Panc1 (cell line): ENCODE measurements at regions of chr17 and their contacts with region 1.

Region 1: DNA sequence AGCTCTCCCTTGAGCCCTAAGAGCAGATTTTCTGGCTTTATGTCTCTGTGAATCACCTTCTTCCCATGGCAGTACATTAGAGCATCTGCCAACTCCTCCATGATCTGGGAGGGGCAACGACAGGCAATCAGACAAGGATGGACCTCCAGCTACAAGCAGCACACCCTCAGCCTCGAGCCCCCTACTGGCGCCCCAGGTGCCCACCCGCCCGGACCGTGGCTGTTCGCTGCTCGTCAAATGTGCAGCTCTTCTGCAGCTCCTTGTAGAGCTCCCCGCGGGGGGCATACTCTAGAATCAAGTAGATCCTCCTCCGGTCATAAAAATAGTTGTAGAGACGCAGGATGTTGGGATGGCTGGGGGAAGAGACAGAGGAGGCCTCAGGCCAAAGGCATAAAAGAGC is 3.8 kb downstream of the AURKB start:
- DNase-seq: no peak
- ATAC-seq: no peak
- H3K4me3 ChIP-seq: no peak overlapping the region
- H3K27ac ChIP-seq: no peak overlapping the region
- H3K4me1 ChIP-seq: peaks cover 17% of the 10 kb centered on the region
- H3K27me3 ChIP-seq: no peaks in the 10 kb centered on the region
- CTCF ChIP-seq: no peak

Region 2: GRCh38 chr17:7803981-7804380 is 402.6 kb before region 1 on chr17:
- CTCF ChIA-PET with region 1: no interaction called
- POLR2A ChIA-PET with region 1: no interaction called
- in situ Hi-C with region 1: no loop called
- intact Hi-C with region 1: no loop called
- DNase-seq: no peak
- ATAC-seq: peak; percentile 60; the same call in 1 of the 2 replicates
- H3K4me3 ChIP-seq: no peak overlapping the region
- H3K27ac ChIP-seq: no peak overlapping the region
- H3K4me1 ChIP-seq: no peaks in the 10 kb centered on the region; the same call in 1 of the 2 replicates
- H3K27me3 ChIP-seq: no peaks in the 10 kb centered on the region
- CTCF ChIP-seq: no peak

Region 3: DNA sequence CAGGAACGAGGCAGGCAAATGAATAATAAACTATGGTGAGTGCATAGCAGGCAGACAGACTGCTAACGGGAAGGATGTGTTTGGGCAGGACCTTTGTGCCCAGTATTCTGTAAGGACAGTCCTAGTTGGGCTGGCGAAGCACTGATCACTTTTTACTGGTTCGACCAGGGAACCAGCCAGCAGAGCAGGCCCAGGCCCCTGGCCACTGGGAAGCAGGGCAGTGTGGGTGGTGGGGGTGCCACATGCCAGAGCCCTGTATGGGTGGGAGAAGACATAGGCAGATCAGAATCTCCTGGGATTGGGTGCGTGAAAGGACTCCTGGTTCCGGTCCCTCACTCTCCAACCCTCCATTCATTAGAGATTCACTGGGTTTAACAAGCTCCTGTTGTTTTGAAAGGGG is 39.8 kb before region 1 on chr17:
- CTCF ChIA-PET with region 1: no interaction called
- POLR2A ChIA-PET with region 1: no interaction called
- in situ Hi-C with region 1: no loop called
- intact Hi-C with region 1: no loop called
- DNase-seq: no peak
- ATAC-seq: no peak
- H3K4me3 ChIP-seq: no peak overlapping the region
- H3K27ac ChIP-seq: no peak overlapping the region
- H3K4me1 ChIP-seq: peaks cover 18% of the 10 kb centered on the region
- H3K27me3 ChIP-seq: no peaks in the 10 kb centered on the region
- CTCF ChIP-seq: no peak

Region 4: DNA sequence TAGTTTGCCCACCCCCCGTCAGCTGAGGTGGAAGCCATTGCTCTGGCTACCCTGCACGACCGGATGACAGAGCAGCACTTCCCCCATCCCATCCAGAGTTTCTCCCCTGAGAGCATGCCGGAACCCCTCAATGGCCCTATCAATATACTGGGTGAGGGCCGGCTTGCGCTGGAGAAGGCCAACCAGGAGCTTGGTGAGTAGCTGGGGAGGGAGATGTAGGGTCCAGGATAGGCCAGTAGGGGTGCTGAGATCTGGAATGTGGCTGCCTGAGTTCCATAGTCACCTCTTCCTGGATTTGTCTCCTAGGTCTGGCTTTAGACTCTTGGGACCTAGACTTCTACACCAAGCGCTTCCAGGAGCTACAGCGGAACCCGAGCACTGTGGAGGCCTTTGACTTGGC is 49.0 kb after region 1 on chr17:
- CTCF ChIA-PET with region 1: no interaction called
- POLR2A ChIA-PET with region 1: no interaction called
- in situ Hi-C with region 1: no loop called
- intact Hi-C with region 1: no loop called
- DNase-seq: no peak
- ATAC-seq: peak; percentile 67; the same call in 1 of the 2 replicates
- H3K4me3 ChIP-seq: no peak overlapping the region
- H3K27ac ChIP-seq: no peak overlapping the region
- H3K4me1 ChIP-seq: no peaks in the 10 kb centered on the region
- H3K27me3 ChIP-seq: no peaks in the 10 kb centered on the region
- CTCF ChIP-seq: no peak

Region 5: DNA sequence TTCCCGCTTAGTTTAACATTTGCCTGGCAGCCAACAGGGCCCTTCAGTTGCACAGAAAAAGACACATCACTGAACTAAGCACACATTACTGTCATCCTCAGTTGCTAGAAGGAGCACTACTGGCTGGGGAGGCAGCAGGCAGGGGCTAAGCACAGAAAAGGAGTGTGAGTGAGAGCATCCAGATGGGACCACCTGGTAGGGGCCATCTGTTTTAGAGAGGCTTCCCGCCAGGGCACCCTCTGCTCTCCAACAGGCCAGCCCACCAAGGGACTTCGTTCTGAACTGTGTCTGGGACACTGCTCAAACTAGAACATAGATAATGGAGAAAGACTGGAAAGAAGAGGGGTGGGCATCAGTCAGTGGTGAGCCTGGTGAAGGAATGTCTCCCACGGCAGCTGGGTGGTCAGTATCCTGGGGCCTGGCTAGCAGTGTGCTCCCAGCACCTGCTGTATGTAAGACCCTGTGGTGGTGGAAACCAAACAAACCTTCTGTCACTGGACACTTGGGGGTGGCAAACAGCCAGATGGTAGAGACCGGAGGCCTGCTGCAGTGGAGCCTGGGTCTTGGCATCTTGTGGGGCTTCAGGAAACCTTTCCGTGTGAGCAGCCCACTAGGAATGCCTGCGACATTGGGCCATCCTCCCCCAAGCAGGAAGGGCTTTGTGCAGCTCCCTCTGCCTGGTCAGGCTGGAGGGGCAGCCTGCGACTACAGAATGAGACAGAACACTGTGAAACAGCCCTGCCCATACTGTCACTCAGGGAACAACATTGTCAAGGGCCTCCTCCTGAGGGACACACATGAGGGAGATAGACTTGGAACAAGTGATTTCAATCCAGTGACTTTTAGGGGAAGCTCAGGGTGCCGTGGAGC is 69.1 kb after region 1 on chr17:
- CTCF ChIA-PET with region 1: no interaction called
- POLR2A ChIA-PET with region 1: no interaction called
- in situ Hi-C with region 1: no loop called
- intact Hi-C with region 1: no loop called
- DNase-seq: no peak
- ATAC-seq: no peak
- H3K4me3 ChIP-seq: no peak overlapping the region
- H3K27ac ChIP-seq: no peak overlapping the region
- H3K4me1 ChIP-seq: no peaks in the 10 kb centered on the region
- H3K27me3 ChIP-seq: no peaks in the 10 kb centered on the region
- CTCF ChIP-seq: no peak

Region 6: GRCh38 chr17:8341456-8341855 is 134.9 kb after region 1 on chr17:
- CTCF ChIA-PET with region 1: no interaction called
- POLR2A ChIA-PET with region 1: interaction called, 10 read pairs
- in situ Hi-C with region 1: no loop called
- intact Hi-C with region 1: no loop called
- DNase-seq: no peak
- ATAC-seq: no peak
- H3K4me3 ChIP-seq: no peak overlapping the region
- H3K27ac ChIP-seq: no peak overlapping the region
- H3K4me1 ChIP-seq: no peaks in the 10 kb centered on the region
- H3K27me3 ChIP-seq: no peaks in the 10 kb centered on the region
- CTCF ChIP-seq: no peak